ENCODE measurements at regions of chr12 and their contacts with region 1.

Region 1: DNA sequence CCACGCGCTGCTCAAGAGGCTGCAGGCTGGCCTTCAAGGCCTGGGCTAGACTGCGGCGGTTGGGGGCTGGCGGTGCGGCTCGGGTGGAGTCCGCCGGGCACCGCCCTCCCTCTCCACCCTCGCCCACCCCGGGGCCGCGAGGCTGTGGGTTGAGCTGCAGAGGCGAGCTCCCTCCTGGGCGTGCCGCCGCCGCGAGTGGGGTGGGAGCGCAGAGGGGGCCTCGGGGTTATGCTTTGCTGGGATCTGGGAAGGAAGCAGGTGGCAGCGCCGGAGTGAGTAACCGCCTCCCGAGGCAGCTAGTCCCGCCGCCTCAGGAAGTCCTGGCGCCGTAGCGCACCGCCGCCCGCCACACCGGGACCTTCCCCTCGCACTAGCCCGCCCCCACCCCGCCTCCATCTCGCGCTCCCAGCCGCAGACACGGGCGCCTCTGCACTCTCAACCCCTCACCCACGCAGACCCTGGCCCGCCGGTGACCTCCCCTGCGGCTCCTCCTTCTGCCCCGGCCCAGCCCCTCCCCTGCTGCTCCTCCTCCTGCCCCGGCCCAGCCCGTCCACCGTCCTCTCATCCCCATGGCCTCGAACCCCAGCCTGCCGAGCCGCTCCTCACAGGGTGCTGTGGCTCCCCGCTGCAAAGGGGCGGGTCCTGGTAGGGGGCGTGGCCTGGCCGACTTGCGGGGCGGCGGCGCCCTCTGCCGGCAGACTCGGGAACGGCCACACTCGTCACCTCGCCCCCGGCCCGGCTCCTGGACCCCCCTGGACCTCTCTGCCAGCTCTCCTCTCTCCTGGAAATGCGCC is 16.6 kb downstream of the TAMALIN start:
- DNase-seq: no peak
- ATAC-seq: peak; percentile 72
- H3K4me3 ChIP-seq: peak overlapping the region; percentile 44; the same call in 1 of the 2 replicates
- H3K27ac ChIP-seq: no peak overlapping the region
- H3K4me1 ChIP-seq: peaks cover 21% of the 10 kb centered on the region
- H3K27me3 ChIP-seq: peaks cover 0 to 9% of the 10 kb centered on the region in 2 experiments; a peak in 2 of 4 replicates
- CTCF ChIP-seq: peak; percentile 91 to 97 (median 94); a peak in 5 of 6 replicates
- EP300 ChIP-seq: no peak
- POLR2A ChIP-seq: no peak
- RAD21 ChIP-seq: peak; percentile 65

Region 2: DNA sequence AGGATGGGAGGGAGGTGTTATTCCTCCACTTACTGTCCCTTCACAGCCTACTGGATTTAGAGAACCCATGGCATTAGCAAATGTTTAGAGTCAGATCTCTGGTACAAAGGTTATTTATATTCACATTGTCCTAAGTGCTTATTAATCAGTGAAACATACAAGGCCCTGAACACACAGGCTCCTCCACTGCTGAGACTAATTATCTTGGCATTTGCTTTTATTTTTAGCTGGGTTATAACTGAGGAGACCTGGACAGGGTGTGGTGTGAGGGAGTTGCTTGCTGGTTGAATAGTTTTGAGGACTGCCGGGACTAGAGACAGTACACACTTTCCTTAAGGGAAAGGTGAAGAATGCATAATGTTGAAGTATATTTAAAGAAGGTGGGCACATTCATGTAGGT is 252.4 kb before region 1 on chr12:
- CTCF ChIA-PET with region 1: no interaction called
- POLR2A ChIA-PET with region 1: no interaction called
- RAD21 ChIA-PET with region 1: no interaction called
- SMC1A ChIA-PET with region 1: no interaction called
- in situ Hi-C with region 1: no loop called
- intact Hi-C with region 1: no loop called
- DNase-seq: no peak
- ATAC-seq: no peak
- H3K4me3 ChIP-seq: no peak overlapping the region
- H3K27ac ChIP-seq: no peak overlapping the region
- H3K4me1 ChIP-seq: no peaks in the 10 kb centered on the region
- H3K27me3 ChIP-seq: peaks cover 0 to 3% of the 10 kb centered on the region in 2 experiments; a peak in 1 of 4 replicates
- CTCF ChIP-seq: no peak
- EP300 ChIP-seq: no peak
- POLR2A ChIP-seq: no peak
- RAD21 ChIP-seq: no peak

Region 3: DNA sequence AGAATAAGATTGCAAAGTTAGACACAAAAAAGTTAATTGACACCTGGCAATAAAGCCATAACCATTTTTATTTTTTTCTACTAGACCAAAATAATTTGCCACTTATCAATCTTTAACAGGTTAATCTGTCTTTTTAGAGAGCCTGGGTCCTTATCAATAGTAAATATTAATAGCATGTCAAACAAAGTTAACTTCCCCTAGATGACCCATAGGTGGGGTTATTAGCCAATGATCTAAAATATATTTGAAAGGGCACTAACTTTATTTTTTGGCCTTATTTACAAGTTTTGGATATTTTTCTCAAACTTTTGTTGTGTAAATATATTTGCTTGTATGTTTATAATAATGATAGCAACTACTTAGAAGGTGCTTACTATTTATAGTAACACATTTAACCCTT is 131.5 kb before region 1 on chr12:
- CTCF ChIA-PET with region 1: interaction called, 5 read pairs
- POLR2A ChIA-PET with region 1: no interaction called
- RAD21 ChIA-PET with region 1: no interaction called
- SMC1A ChIA-PET with region 1: no interaction called
- in situ Hi-C with region 1: no loop called
- intact Hi-C with region 1: loop called (anchors 5 kb)
- DNase-seq: no peak
- ATAC-seq: peak; percentile 46; the same call in 1 of the 3 replicates
- H3K4me3 ChIP-seq: no peak overlapping the region
- H3K27ac ChIP-seq: no peak overlapping the region
- H3K4me1 ChIP-seq: no peaks in the 10 kb centered on the region
- H3K27me3 ChIP-seq: 0 out of 4 replicates have a peak, but pooled peaks cover 0 to under 1% of the 10 kb centered on the region in 2 experiments
- CTCF ChIP-seq: peak in 2 of 3 experiments; percentile 13 to 40; a peak in 2 of 6 replicates
- EP300 ChIP-seq: no peak
- POLR2A ChIP-seq: no peak
- RAD21 ChIP-seq: peak; percentile 36; the same call in 1 of the 2 replicates

Region 4: GRCh38 chr12:51994959-51995358 is 28.4 kb before region 1 on chr12:
- CTCF ChIA-PET with region 1: interaction called, 334 read pairs
- POLR2A ChIA-PET with region 1: interaction called, 9 read pairs
- RAD21 ChIA-PET with region 1: interaction called, 54 read pairs
- SMC1A ChIA-PET with region 1: interaction called, 28 read pairs
- in situ Hi-C with region 1: no loop called
- intact Hi-C with region 1: loop called (anchors 1 kb)
- DNase-seq: no peak
- ATAC-seq: no peak
- H3K4me3 ChIP-seq: no peak overlapping the region
- H3K27ac ChIP-seq: no peak overlapping the region
- H3K4me1 ChIP-seq: no peaks in the 10 kb centered on the region
- H3K27me3 ChIP-seq: no peaks in the 10 kb centered on the region; a peak in 1 of 4 replicates
- CTCF ChIP-seq: no peak
- EP300 ChIP-seq: no peak
- POLR2A ChIP-seq: no peak
- RAD21 ChIP-seq: no peak

Region 5: GRCh38 chr12:52041695-52042123 is 18.3 kb after region 1 on chr12:
- CTCF ChIA-PET with region 1: interaction called, 61 read pairs
- POLR2A ChIA-PET with region 1: interaction called, 7 read pairs
- RAD21 ChIA-PET with region 1: interaction called, 15 read pairs
- SMC1A ChIA-PET with region 1: interaction called, 12 read pairs
- in situ Hi-C with region 1: no loop called
- intact Hi-C with region 1: no loop called
- DNase-seq: no peak
- ATAC-seq: peak; percentile 66
- H3K4me3 ChIP-seq: no peak overlapping the region
- H3K27ac ChIP-seq: no peak overlapping the region; the same call in 1 of the 2 replicates
- H3K4me1 ChIP-seq: peaks cover 15% of the 10 kb centered on the region
- H3K27me3 ChIP-seq: no peaks in the 10 kb centered on the region
- CTCF ChIP-seq: peak; percentile 7 to 28 (median 19); a peak in 2 of 6 replicates
- EP300 ChIP-seq: no peak; a peak in 1 of 4 replicates
- POLR2A ChIP-seq: no peak
- RAD21 ChIP-seq: peak; percentile 36; the same call in 1 of the 2 replicates

Region 6: GRCh38 chr12:52082988-52083637 is 59.7 kb after region 1 on chr12:
- CTCF ChIA-PET with region 1: interaction called, 622 read pairs
- POLR2A ChIA-PET with region 1: interaction called, 4 read pairs
- RAD21 ChIA-PET with region 1: interaction called, 111 read pairs
- SMC1A ChIA-PET with region 1: interaction called, 322 read pairs
- in situ Hi-C with region 1: loop called (anchors 5 kb)
- intact Hi-C with region 1: loop called (anchors 1 kb)
- DNase-seq: no peak
- ATAC-seq: peak; percentile 79
- H3K4me3 ChIP-seq: no peak overlapping the region
- H3K27ac ChIP-seq: no peak overlapping the region
- H3K4me1 ChIP-seq: peaks cover 16% of the 10 kb centered on the region
- H3K27me3 ChIP-seq: no peaks in the 10 kb centered on the region; a peak in 1 of 4 replicates
- CTCF ChIP-seq: peak; percentile 91 to 98 (median 98)
- EP300 ChIP-seq: no peak
- POLR2A ChIP-seq: no peak
- RAD21 ChIP-seq: peak; percentile 90

Region 7: GRCh38 chr12:52243856-52244614 is 220.7 kb after region 1 on chr12:
- CTCF ChIA-PET with region 1: interaction called, 13 read pairs
- POLR2A ChIA-PET with region 1: no interaction called
- RAD21 ChIA-PET with region 1: interaction called, 3 read pairs
- SMC1A ChIA-PET with region 1: interaction called, 5 read pairs
- in situ Hi-C with region 1: no loop called
- intact Hi-C with region 1: no loop called
- DNase-seq: peak; percentile 66
- ATAC-seq: peak; percentile 93
- H3K4me3 ChIP-seq: peak overlapping the region; percentile 42; the same call in 1 of the 2 replicates
- H3K27ac ChIP-seq: peak overlapping the region; percentile 86
- H3K4me1 ChIP-seq: peaks cover 22% of the 10 kb centered on the region
- H3K27me3 ChIP-seq: no peaks in the 10 kb centered on the region
- CTCF ChIP-seq: 0 out of 6 replicates have a peak, but pooled peaks of 1 of the 3 experiments have one; percentile 14
- EP300 ChIP-seq: 0 out of 4 replicates have a peak, but pooled peaks of 1 of the 2 experiments have one; percentile 28
- POLR2A ChIP-seq: peak; percentile 77
- RAD21 ChIP-seq: no peak

Measured in GM12878 (cell line).